Cardiac septum (tissue), 1 donor: ENCODE measurements at regions of chr1 and their contacts with region 1.

Region 1: GRCh38 chr1:85692730-85693314 is 15.4 kb downstream of the ZNHIT6 start:
- DNase-seq: no peak

Region 2: DNA sequence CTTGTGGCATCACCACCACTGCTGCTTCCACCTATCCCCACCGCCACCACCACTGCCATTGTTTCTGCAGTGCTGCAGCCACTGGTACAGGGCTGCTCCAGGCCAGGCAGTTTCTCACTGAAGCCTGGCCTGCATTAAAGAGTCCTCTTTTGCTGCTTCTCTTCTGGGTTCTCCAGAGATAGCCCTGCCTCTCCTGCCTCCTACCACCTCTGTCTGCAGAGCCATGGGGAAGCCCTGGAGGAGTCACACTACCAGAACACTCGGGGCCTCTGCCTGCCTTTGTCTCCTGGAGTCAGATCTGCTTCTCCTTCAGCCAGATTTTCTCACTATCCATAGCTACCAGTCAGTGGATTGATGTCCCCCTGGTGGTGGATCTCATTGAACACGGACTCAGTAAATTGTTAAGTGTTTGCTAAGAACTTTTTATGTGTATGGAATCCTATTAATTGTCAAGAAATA is 190.2 kb before region 1 on chr1:
- intact Hi-C with region 1: loop called (anchors 10 kb)
- DNase-seq: no peak